CD4-positive, alpha-beta memory T cell (primary cell): ENCODE measurements at regions of chr9 and their contacts with region 1.

Region 1: GRCh38 chr9:78296893-78297671 is at the start of gene PSAT1:
- DNase-seq: peak; percentile 86 to 90 (median 88)
- H3K4me3 ChIP-seq: peak within 1 kb of the TSS; percentile 55 to 83
- H3K4me3 Mint-ChIP-seq: peak within 1 kb of the TSS; percentile 89 to 95 (median 90)
- H3K27ac ChIP-seq: peak within 1 kb of the TSS; percentile 40
- H3K27ac Mint-ChIP-seq: peak within 1 kb of the TSS; percentile 43 to 91 (median 80)
- H3K4me1 ChIP-seq: peaks cover 25% of the 10 kb centered on the region
- H3K4me1 Mint-ChIP-seq: peaks cover 18 to 37% (median 25%) of the 10 kb centered on the region in 4 donors
- H3K27me3 ChIP-seq: no peaks in the 10 kb centered on the region
- H3K27me3 Mint-ChIP-seq: peaks cover 0 to 2% of the 10 kb centered on the region in 2 donors
- total RNA-seq, gene PSAT1: 9.7 to 10.3 TPM

Region 2: DNA sequence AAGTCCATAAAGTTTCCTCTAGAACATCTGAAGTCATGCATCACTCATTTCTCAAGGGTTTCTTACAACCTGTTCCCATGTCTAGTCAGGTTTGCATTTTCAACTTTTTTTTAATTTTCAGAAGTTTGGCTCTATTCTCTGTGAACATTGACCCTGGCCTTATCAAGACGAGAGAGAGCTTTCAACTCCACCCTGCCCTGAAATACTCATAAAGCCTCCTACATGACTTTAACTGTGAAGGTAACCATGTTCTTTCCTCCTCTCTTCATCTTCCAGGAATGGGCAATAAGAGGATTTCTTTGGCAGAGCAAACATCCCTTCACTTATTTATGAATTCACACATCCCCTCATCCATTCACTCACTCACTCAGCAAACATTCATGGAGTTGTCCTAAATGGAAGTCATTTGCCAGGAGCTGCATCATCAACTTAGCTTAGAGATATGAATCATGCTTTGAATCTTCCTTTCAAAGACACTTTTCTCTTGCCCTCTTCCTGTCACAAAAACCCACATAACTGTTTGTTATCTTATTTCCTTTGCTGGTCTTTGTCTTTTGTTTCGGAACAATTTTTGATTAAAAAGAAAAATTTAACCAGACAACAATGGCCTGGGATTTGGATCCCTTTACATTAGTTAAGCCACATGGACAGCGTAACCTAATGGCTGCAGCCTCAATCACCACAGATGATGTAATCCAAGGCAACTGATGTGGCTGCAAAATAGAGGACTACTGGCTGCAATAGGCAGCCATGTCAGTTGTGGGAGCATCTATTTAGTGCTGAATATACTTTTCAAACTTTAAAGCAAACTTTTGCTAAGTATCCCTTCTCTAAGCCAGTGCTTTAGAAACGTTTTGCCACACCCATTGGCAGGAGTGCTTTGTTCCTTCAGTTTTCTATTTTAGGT is 222.4 kb before region 1 on chr9:
- CTCF ChIA-PET with region 1: no interaction called
- POLR2A ChIA-PET with region 1: no interaction called
- intact Hi-C with region 1: no loop called
- DNase-seq: peak; percentile 31 to 55 (median 48)
- H3K4me3 ChIP-seq: peak overlapping the region in 1 of 2 donors; percentile 44
- H3K4me3 Mint-ChIP-seq: peak overlapping the region; percentile 62 to 89 (median 80)
- H3K27ac ChIP-seq: peak overlapping the region; percentile 7
- H3K27ac Mint-ChIP-seq: peak overlapping the region; percentile 80 to 96 (median 91)
- H3K4me1 ChIP-seq: peaks cover 40% of the 10 kb centered on the region
- H3K4me1 Mint-ChIP-seq: peaks cover 45 to 60% (median 54%) of the 10 kb centered on the region in 4 donors
- H3K27me3 ChIP-seq: no peaks in the 10 kb centered on the region
- H3K27me3 Mint-ChIP-seq: no peaks in the 10 kb centered on the region

Region 3: GRCh38 chr9:78235756-78236538 is 61.1 kb before region 1 on chr9 and contains the start of gene CEP78:
- CTCF ChIA-PET with region 1: no interaction called
- POLR2A ChIA-PET with region 1: interaction called, 13 read pairs
- intact Hi-C with region 1: loop called (anchors 2 kb)
- DNase-seq: peak; percentile 82 to 88 (median 85)
- H3K4me3 ChIP-seq: peak within 1 kb of the TSS; percentile 37 to 89
- H3K4me3 Mint-ChIP-seq: peak within 1 kb of the TSS in 3 of 8 donors; percentile 92 to 98 (median 97)
- H3K27ac ChIP-seq: peak within 1 kb of the TSS; percentile 81
- H3K27ac Mint-ChIP-seq: peak within 1 kb of the TSS; percentile 88 to 99 (median 96)
- H3K4me1 ChIP-seq: peaks cover 40% of the 10 kb centered on the region
- H3K4me1 Mint-ChIP-seq: peaks cover 30 to 35% (median 32%) of the 10 kb centered on the region in 4 donors
- H3K27me3 ChIP-seq: no peaks in the 10 kb centered on the region
- H3K27me3 Mint-ChIP-seq: no peaks in the 10 kb centered on the region
- total RNA-seq, gene CEP78: 25.3 to 27.6 TPM

Region 4: DNA sequence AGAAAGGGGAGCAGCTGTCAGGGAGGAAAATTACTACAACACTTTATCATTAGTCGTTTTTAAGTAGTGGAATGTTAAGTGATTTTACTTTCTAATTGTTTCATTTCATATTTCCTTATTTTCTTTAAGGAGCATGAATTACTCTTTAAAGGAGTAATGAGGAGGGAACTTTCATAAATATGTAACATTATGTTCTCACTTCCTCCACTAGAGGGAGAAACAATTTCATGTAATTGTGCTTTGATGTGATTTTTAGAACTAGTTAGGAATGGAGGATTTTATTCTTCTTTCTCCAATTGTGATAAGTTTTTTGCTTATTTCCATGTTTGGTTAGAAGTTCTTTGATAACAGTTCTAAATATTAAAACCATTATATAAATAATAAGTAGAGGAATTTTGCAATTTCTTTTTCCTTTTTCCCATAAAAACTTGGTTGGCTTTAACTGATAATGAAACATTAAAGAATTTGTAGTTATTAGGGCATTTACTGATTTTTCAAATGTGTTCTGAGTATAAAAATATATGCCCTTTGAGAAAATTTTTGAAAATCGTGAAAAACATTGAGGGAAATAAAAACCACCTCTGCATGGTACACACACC is 35.6 kb before region 1 on chr9:
- CTCF ChIA-PET with region 1: interaction called, 3 read pairs
- POLR2A ChIA-PET with region 1: no interaction called
- intact Hi-C with region 1: loop called (anchors 1 kb)
- DNase-seq: peak in 3 of 5 donors; percentile 16 to 20 (median 19)
- H3K4me3 ChIP-seq: no peak overlapping the region
- H3K4me3 Mint-ChIP-seq: no peak overlapping the region
- H3K27ac ChIP-seq: no peak overlapping the region
- H3K27ac Mint-ChIP-seq: no peak overlapping the region
- H3K4me1 ChIP-seq: no peaks in the 10 kb centered on the region
- H3K4me1 Mint-ChIP-seq: peaks cover 0 to 3% (median 0%) of the 10 kb centered on the region in 4 donors
- H3K27me3 ChIP-seq: no peaks in the 10 kb centered on the region
- H3K27me3 Mint-ChIP-seq: no peaks in the 10 kb centered on the region

Region 5: DNA sequence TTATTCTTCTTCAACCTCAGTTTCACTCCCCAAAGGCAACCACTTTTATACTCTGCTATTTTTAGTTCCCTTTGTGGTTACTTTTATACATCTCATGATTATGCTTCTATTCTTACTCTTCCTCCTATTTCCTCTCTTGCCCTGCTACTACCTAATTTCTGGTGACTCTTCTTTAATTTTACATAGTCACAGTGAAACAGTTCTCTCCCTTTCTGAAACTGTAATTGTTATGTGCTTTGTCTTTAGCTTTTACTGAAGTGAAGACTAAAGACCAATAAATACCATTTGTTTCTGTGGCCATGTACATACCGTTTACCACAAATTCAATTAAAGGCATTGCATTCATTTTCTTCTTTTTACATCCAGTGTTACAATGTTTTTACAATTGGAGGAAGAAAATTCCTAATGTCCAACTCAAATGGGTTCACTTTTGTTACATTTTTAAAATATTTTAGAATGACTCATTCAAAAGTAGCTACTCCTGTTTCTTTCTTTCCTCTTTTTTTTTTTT is 410.5 kb after region 1 on chr9:
- CTCF ChIA-PET with region 1: no interaction called
- POLR2A ChIA-PET with region 1: no interaction called
- intact Hi-C with region 1: no loop called
- DNase-seq: no peak
- H3K4me3 ChIP-seq: no peak overlapping the region
- H3K4me3 Mint-ChIP-seq: no peak overlapping the region
- H3K27ac ChIP-seq: no peak overlapping the region
- H3K27ac Mint-ChIP-seq: no peak overlapping the region
- H3K4me1 ChIP-seq: no peaks in the 10 kb centered on the region
- H3K4me1 Mint-ChIP-seq: no peaks in the 10 kb centered on the region
- H3K27me3 ChIP-seq: no peaks in the 10 kb centered on the region
- H3K27me3 Mint-ChIP-seq: no peaks in the 10 kb centered on the region